CD4-positive, alpha-beta memory T cell (primary cell): ENCODE measurements at regions of chr12 and their contacts with region 1.

Region 1: DNA sequence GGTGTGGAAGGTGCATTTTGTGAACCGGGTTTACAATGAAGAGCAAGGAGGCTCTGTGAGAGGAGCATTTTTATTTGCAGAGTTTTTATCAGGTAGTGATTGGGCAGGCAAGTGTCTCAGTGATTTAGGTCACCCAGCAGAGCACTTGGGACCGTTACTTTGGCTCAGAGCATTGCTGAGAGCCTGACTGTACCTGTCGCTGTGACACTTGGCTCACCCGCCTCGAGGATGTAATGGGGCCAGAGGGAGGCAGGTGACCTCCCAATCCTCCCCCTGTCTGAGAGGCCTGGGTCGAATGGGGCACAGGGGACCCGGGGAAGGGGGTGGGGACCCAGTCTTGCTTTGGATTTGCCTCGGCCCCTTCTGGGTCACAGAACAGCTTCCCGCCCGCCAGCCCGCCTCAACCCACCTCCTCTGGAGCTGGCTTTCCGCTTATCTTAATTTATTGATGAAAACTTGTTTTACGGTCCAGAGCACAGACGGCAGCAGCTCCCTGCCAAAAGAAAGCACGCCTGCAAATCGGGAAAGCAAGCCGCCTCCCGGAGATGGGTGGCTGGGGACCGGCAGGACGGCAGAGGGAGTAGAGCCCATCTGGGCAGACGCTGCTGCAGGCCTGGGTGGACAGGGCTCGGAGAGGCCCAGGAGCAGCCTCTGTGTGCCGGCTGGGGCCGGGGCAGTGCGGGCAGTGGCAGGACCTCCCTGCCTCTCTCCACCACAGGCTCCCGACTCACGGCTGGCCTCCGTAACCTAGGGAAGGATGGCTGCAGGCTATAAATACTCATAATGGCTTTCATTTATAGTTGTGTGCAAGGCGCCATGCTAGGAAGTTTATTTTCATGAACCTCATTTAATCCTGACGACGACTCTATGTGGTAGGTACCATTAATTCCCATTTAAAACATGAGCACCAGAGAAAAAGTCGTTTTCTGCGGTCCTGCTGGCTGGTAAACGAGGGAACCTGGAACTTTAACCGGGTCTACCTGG is 187.1 kb downstream of the TSPAN9 start:
- DNase-seq: no peak
- H3K4me3 ChIP-seq: no peak overlapping the region
- H3K4me3 Mint-ChIP-seq: no peak overlapping the region
- H3K27ac ChIP-seq: no peak overlapping the region
- H3K27ac Mint-ChIP-seq: no peak overlapping the region
- H3K4me1 ChIP-seq: no peaks in the 10 kb centered on the region
- H3K4me1 Mint-ChIP-seq: no peaks in the 10 kb centered on the region
- H3K27me3 ChIP-seq: no peaks in the 10 kb centered on the region
- H3K27me3 Mint-ChIP-seq: peaks cover 0 to 5% of the 10 kb centered on the region in 2 donors

Region 2: DNA sequence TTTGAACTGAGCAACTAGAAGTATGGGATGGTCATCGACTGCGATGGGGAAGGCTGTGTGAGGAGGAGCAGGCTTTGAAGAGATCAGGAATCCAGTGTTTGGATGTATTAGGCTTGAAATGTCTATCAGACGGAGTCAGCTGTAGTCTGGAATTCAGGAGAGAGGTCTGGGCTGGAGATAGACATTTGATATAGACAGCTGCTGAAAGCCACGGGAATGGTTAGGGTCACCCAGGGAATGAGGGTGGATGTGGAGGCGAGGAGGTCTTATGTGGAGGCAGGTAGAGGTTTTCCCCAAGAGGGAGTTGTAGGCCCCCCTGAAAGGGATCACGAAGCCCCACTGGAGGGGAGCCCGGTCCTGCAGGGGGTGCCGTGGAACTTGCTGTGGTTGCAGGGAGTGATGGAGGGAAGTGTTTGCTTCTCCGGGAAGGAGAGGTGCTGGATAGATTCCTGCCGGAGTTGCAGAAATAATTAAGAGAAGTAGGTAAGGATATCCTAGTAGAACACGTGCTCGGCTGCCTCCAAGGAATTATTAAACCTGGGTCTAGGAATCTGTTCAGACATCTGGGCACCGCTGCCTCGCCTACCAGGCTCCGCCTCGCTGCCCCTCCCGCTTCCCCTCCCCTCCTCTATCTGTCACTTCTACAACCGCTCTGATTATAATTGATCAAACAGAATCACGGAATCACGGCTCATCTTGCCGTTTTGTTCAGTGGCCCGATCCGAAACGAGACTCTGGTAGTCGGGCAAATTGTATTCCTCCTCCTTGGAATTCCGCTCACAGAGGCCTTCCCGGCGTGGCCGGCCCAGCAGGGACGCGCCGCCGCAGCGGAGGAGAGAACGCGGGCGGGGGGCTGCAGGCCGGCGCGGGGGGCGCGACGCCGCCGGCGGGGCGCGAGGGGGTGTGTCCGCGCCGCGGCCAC is 1212.3 kb before region 1 on chr12:
- CTCF ChIA-PET with region 1: no interaction called
- POLR2A ChIA-PET with region 1: no interaction called
- intact Hi-C with region 1: no loop called
- DNase-seq: no peak
- H3K4me3 ChIP-seq: no peak overlapping the region
- H3K4me3 Mint-ChIP-seq: peak overlapping the region; percentile 49 to 81 (median 76)
- H3K27ac ChIP-seq: no peak overlapping the region
- H3K27ac Mint-ChIP-seq: no peak overlapping the region
- H3K4me1 ChIP-seq: peaks cover 6% of the 10 kb centered on the region
- H3K4me1 Mint-ChIP-seq: peaks cover 13 to 27% (median 20%) of the 10 kb centered on the region in 4 donors
- H3K27me3 ChIP-seq: peaks cover 37% of the 10 kb centered on the region
- H3K27me3 Mint-ChIP-seq: peaks cover 53 to 67% of the 10 kb centered on the region in 2 donors

Region 3: GRCh38 chr12:3275171-3276041 is 11.2 kb after region 1 on chr12:
- CTCF ChIA-PET with region 1: interaction called, 19 read pairs
- POLR2A ChIA-PET with region 1: no interaction called
- intact Hi-C with region 1: no loop called
- DNase-seq: peak in 4 of 5 donors; percentile 46 to 58 (median 52)
- H3K4me3 ChIP-seq: no peak overlapping the region
- H3K4me3 Mint-ChIP-seq: peak overlapping the region in 2 of 8 donors; percentile 25 to 46
- H3K27ac ChIP-seq: no peak overlapping the region
- H3K27ac Mint-ChIP-seq: no peak overlapping the region
- H3K4me1 ChIP-seq: no peaks in the 10 kb centered on the region
- H3K4me1 Mint-ChIP-seq: no peaks in the 10 kb centered on the region
- H3K27me3 ChIP-seq: no peaks in the 10 kb centered on the region
- H3K27me3 Mint-ChIP-seq: peaks cover 8 to 20% of the 10 kb centered on the region in 2 donors